Naive thymus-derived CD4-positive, alpha-beta T cell (primary cell): ENCODE measurements at regions of chr4 and their contacts with region 1.

Region 1: DNA sequence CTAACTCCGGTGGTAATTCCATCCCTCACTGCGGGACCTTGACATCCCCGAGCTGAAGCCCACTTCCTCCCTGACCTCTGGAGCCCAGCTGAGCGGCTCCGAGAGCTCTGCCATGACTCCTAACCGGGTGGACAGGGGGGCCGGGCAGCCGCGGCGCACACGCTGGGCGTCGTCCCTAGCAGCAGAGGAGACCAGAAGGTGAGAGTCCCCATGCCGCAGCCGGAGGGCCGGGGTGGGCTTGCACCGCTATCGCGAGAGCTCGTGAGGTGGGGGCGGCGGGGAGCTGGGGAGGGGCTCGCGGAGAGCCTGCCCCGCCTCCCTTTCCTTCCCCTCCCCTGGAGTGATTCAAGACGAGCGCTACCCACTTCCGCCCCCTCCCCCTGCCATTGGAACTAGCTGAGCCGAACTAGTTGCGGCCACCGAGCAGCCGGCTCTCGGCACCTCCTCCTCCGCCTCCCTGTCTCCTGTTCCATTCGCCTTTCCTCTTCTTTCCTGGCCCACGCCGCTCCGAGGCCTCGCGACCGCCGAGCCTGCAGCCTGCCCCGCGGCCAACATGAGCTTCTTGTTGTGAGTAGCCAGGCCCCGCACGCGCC is at the start of gene MOB1B:
- DNase-seq: peak; percentile 59 to 89 (median 84)
- ATAC-seq: peak; percentile 98
- H3K4me3 ChIP-seq: peak within 1 kb of the TSS; percentile 87
- H3K4me3 Mint-ChIP-seq: peak within 1 kb of the TSS; percentile 94 to 100 (median 98)
- H3K27ac ChIP-seq: peak within 1 kb of the TSS; percentile 78
- H3K27ac Mint-ChIP-seq: peak within 1 kb of the TSS; percentile 86 to 96 (median 89)
- H3K4me1 ChIP-seq: peaks cover 6 to 14% of the 10 kb centered on the region in 2 donors
- H3K4me1 Mint-ChIP-seq: peaks cover 23 to 46% (median 40%) of the 10 kb centered on the region in 7 donors
- H3K27me3 ChIP-seq: no peaks in the 10 kb centered on the region
- H3K27me3 Mint-ChIP-seq: peaks cover 0 to 2% (median 0%) of the 10 kb centered on the region in 5 donors
- total RNA-seq, gene MOB1B: 12.0 to 20.3 (median 13.5) TPM

Region 2: GRCh38 chr4:70687821-70688794 is 214.0 kb before region 1 on chr4 and contains the start of gene UTP3:
- CTCF ChIA-PET with region 1: interaction called, 5 read pairs
- POLR2A ChIA-PET with region 1: interaction called, 5 read pairs
- intact Hi-C with region 1: loop called (anchors 1 kb)
- DNase-seq: peak; percentile 85 to 95 (median 92)
- ATAC-seq: peak; percentile 95
- H3K4me3 ChIP-seq: peak within 1 kb of the TSS; percentile 69
- H3K4me3 Mint-ChIP-seq: peak within 1 kb of the TSS; percentile 93 to 99 (median 98)
- H3K27ac ChIP-seq: peak within 1 kb of the TSS; percentile 94
- H3K27ac Mint-ChIP-seq: peak within 1 kb of the TSS; percentile 93 to 100 (median 99)
- H3K4me1 ChIP-seq: peaks cover 7 to 13% of the 10 kb centered on the region in 2 donors
- H3K4me1 Mint-ChIP-seq: peaks cover 12 to 48% (median 46%) of the 10 kb centered on the region in 7 donors
- H3K27me3 ChIP-seq: no peaks in the 10 kb centered on the region
- H3K27me3 Mint-ChIP-seq: no peaks in the 10 kb centered on the region
- total RNA-seq, gene UTP3: 17.4 to 44.9 (median 36.5) TPM

Region 3: DNA sequence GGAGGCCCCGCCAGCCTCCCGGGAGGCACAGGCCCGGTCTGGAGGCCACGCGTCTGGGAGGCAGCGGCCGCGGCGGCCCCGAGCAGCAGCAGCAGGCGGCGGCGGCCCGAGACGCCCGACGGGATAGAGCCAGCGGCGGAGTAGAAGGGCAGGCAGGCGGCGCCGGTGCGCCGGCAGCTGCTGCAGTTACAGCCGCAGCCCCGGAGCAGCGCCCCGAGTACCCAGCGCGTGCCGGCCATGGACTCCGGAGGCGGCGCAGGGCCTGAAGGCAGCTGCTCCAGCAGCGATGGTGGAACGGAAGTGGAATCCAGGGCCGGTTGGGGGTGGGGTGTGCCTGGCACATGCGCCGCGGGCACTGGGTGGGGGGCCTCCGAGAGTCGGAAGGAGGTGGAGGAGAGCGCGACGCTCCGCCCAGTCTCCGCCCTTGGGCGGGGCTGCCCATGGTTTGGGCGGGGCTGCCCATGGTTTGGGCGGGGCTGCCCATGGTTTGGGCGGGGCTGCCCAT is 62.4 kb before region 1 on chr4 and contains the start of gene GRSF1:
- CTCF ChIA-PET with region 1: no interaction called
- POLR2A ChIA-PET with region 1: interaction called, 14 read pairs
- intact Hi-C with region 1: loop called (anchors 1 kb)
- DNase-seq: peak; percentile 92 to 96 (median 95)
- ATAC-seq: peak; percentile 96
- H3K4me3 ChIP-seq: peak within 1 kb of the TSS; percentile 83
- H3K4me3 Mint-ChIP-seq: peak within 1 kb of the TSS; percentile 89 to 99 (median 97)
- H3K27ac ChIP-seq: peak within 1 kb of the TSS; percentile 88
- H3K27ac Mint-ChIP-seq: peak within 1 kb of the TSS; percentile 91 to 98 (median 96)
- H3K4me1 ChIP-seq: peaks cover 17 to 22% of the 10 kb centered on the region in 2 donors
- H3K4me1 Mint-ChIP-seq: peaks cover 8 to 40% (median 29%) of the 10 kb centered on the region in 7 donors
- H3K27me3 ChIP-seq: no peaks in the 10 kb centered on the region
- H3K27me3 Mint-ChIP-seq: no peaks in the 10 kb centered on the region
- total RNA-seq, gene GRSF1: 35.9 to 76.0 (median 48.0) TPM

Region 4: DNA sequence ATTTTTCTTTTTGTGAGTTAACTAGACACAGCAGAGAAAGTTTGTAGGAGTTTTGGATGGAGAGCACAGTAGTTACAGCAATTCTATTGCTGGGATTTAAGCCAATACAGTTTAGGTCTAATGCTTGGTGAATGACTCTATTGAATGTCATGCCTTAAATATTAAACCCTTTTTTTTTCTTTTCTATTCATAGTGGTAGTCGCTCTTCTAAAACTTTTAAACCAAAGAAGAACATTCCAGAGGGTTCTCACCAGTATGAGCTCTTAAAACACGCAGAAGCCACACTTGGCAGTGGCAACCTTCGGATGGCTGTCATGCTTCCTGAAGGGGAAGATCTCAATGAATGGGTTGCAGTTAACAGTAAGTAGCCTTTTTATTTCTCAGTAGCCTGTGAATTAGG is 56.6 kb after region 1 on chr4:
- CTCF ChIA-PET with region 1: interaction called, 3 read pairs
- POLR2A ChIA-PET with region 1: no interaction called
- intact Hi-C with region 1: loop called in 1 of 2 experiments (anchors 10 kb)
- DNase-seq: no peak
- ATAC-seq: no peak
- H3K4me3 ChIP-seq: no peak overlapping the region
- H3K4me3 Mint-ChIP-seq: no peak overlapping the region
- H3K27ac ChIP-seq: no peak overlapping the region
- H3K27ac Mint-ChIP-seq: no peak overlapping the region
- H3K4me1 ChIP-seq: no peaks in the 10 kb centered on the region
- H3K4me1 Mint-ChIP-seq: peaks cover 0 to 11% (median 5%) of the 10 kb centered on the region in 7 donors
- H3K27me3 ChIP-seq: no peaks in the 10 kb centered on the region
- H3K27me3 Mint-ChIP-seq: no peaks in the 10 kb centered on the region

Region 5: DNA sequence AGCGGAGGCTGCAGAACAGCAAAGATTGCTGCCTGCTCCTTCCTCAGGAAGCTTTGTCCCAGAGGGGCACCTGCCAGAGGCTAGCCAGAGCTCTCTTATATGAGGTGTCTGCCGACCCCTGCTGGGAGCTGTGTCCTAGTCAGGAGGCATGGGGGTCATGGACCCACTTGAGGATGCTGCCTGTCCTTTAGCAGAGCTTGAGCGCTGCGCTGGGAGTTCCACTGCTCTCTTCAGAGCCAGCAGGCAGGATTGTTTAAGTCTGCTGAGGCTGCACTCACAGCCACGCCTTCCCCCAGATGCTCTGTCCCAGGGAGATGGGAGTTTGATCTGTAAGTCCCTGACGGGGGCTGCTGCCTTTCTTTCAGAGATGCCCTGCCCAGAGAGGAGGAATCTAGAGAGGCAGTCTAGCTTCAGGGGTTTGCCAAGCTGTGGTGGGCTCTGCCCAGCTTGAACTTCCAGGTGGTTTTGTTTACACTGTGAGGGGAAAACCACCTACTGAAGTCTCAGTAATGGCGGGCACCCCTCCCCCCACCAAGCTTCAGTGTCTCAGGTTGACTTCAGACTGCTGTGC is 102.3 kb after region 1 on chr4:
- CTCF ChIA-PET with region 1: interaction called, 4 read pairs
- POLR2A ChIA-PET with region 1: no interaction called
- intact Hi-C with region 1: loop called in 1 of 2 experiments (anchors 1 kb)
- DNase-seq: peak in 8 of 9 donors; percentile 47 to 77 (median 52)
- ATAC-seq: peak; percentile 89
- H3K4me3 ChIP-seq: peak overlapping the region; percentile 8
- H3K4me3 Mint-ChIP-seq: peak overlapping the region; percentile 30 to 80 (median 68)
- H3K27ac ChIP-seq: peak overlapping the region; percentile 70
- H3K27ac Mint-ChIP-seq: peak overlapping the region; percentile 58 to 93 (median 86)
- H3K4me1 ChIP-seq: peaks cover 23 to 28% of the 10 kb centered on the region in 2 donors
- H3K4me1 Mint-ChIP-seq: peaks cover 68 to 92% (median 88%) of the 10 kb centered on the region in 7 donors
- H3K27me3 ChIP-seq: no peaks in the 10 kb centered on the region
- H3K27me3 Mint-ChIP-seq: no peaks in the 10 kb centered on the region

Region 6: GRCh38 chr4:71184195-71184781 is 282.2 kb after region 1 on chr4:
- CTCF ChIA-PET with region 1: no interaction called
- POLR2A ChIA-PET with region 1: no interaction called
- intact Hi-C with region 1: loop called in 1 of 2 experiments (anchors 10 kb)
- DNase-seq: peak in 5 of 9 donors; percentile 20 to 43 (median 32)
- ATAC-seq: peak; percentile 57
- H3K4me3 ChIP-seq: no peak overlapping the region
- H3K4me3 Mint-ChIP-seq: no peak overlapping the region
- H3K27ac ChIP-seq: no peak overlapping the region
- H3K27ac Mint-ChIP-seq: no peak overlapping the region
- H3K4me1 ChIP-seq: peaks cover 4 to 5% of the 10 kb centered on the region in 2 donors
- H3K4me1 Mint-ChIP-seq: peaks cover 13 to 30% (median 25%) of the 10 kb centered on the region in 7 donors
- H3K27me3 ChIP-seq: peaks cover 0 to 14% of the 10 kb centered on the region in 2 donors
- H3K27me3 Mint-ChIP-seq: peaks cover 35 to 53% (median 38%) of the 10 kb centered on the region in 5 donors